HAP-1 (cell line): ENCODE measurements at regions of chr3 and their contacts with region 1.

Region 1: DNA sequence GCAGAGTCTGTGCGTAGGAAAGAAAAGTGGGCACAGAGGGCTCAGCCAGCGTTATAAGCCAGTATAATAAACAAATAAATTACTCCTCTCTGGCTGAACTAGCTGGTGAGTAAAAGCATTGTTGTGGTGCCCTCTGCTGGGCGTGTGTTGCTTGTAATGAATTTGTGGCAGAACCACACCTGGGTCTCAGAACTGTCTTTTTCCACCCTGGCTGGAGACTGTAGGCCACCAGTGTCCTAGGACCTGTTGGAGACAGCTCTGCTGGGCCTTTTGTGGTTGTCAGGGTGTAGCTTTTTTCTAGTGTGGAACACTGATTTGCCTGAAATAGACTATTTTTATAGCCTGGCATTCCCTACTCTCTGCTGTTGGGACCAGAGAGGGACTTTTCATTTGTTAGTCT is 130.5 kb upstream of the EIF1B start:
- DNase-seq: peak; percentile 61 to 88
- H3K4me3 ChIP-seq: no peak overlapping the region
- H3K4me1 ChIP-seq: peaks cover 9% of the 10 kb centered on the region
- H3K27me3 ChIP-seq: no peaks in the 10 kb centered on the region

Region 2: DNA sequence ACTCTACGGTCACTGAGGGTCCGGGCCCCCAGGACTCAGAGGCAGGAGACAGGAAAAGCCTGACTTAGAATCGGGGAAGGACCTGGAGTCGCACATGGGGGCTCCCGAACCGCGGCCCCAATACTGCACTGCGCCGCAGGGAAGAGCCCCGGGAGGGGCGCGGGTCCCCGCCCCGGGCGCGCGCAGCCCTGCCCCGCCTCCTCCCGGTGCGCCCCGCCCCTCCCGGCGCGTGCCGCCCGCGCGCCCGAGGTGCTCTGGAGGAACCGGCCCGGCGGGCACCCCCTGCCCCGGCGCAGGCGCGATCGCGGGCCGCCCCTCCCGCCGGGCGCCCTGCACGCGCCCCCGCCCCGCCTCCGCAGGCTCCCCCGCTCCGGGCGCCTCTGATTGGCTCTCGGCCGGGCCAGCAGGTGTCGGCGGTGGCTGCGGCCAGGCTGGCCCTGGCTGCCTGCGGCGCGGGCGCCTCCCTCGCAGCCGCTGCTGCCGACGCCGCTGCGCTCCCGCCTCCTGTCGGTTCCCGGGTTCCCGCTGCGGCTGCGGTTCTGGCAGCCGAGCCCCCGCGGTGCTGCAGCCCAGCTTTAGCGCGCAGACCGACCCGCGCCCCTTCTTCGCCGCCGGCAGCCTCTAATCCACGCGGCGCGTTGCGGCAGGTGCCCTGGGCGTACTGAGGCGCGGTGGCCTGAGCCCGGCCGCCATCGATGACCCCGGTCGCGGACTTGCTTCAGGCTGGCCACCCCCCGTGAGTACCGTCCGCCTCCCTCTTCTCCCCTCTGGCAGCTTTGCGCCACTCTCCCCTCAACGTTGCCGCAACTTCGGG is 369.6 kb before region 1 on chr3 and contains the start of gene MYRIP:
- in situ Hi-C with region 1: loop called (anchors 10 kb)
- DNase-seq: peak; percentile 87 to 91
- H3K4me3 ChIP-seq: peak within 1 kb of the TSS; percentile 64
- H3K4me1 ChIP-seq: peaks cover 6% of the 10 kb centered on the region
- H3K27me3 ChIP-seq: no peaks in the 10 kb centered on the region

Region 3: DNA sequence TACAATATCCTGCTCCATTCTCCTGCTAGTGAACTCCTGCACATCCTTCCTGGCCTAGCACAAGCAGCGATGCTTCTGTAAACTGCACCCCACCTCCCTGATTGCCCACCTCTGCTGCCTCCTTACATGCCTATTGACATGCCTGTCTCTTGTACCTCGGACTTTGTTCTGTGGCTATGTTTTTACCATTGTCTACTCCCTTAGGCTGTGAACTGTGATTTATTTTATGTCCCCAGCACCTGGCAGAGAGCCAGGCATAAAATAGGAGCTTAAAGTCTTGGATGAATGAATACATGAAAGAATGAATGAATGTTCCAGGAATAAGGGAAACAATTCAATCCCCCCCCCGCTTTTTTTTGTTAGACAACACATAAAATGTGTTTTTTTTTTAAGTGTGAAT is 159.6 kb before region 1 on chr3:
- in situ Hi-C with region 1: no loop called
- DNase-seq: peak; percentile 62 to 72
- H3K4me3 ChIP-seq: no peak overlapping the region
- H3K4me1 ChIP-seq: peaks cover 4% of the 10 kb centered on the region
- H3K27me3 ChIP-seq: no peaks in the 10 kb centered on the region